Stomach (tissue), 19 donors: ENCODE measurements at regions of chr7 and their contacts with region 1.

Region 1: DNA sequence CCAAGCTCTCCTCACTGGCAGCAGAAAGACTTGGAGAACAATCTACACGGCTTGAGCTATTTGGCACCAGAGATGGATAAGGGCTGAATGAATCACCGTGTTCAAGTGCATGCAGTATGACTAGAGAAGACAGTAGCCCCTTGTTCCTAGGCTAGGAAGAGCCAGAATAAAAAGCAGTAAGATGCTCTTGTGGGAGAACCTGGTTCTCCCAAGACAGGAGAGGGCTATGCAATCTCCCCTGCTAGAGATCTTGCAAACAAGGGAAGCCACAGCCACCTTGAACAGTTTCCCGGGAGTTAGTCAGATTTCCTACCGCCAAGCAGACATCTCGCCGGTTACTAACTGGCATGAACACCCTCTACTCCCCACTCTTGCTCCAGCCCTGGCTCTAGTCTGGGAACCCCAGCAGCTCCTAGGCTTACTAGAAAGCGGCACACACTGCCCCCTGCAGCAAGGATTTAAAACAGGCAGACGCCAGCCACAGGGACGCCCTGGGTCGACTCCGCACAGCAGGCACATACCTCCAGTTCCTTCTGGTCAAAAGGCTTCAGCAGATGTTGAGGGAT is 107.3 kb downstream of the SMURF1 start:
- DNase-seq: peak in 1 of 2 donors; percentile 37
- H3K4me3 ChIP-seq: no peak overlapping the region
- H3K27ac ChIP-seq: peak overlapping the region in 1 of 5 donors; percentile 28
- H3K4me1 ChIP-seq: peaks cover 12 to 16% (median 16%) of the 10 kb centered on the region in 4 donors
- H3K27me3 ChIP-seq: no peaks in the 10 kb centered on the region
- CTCF ChIP-seq: no peak
- EP300 ChIP-seq: no peak
- POLR2A ChIP-seq: no peak

Region 2: GRCh38 chr7:98956937-98957336 is 79.7 kb before region 1 on chr7:
- intact Hi-C with region 1: no loop called
- DNase-seq: no peak
- H3K4me3 ChIP-seq: no peak overlapping the region
- H3K27ac ChIP-seq: no peak overlapping the region
- H3K4me1 ChIP-seq: no peaks in the 10 kb centered on the region
- H3K27me3 ChIP-seq: no peaks in the 10 kb centered on the region
- CTCF ChIP-seq: no peak
- EP300 ChIP-seq: no peak
- POLR2A ChIP-seq: no peak

Region 3: DNA sequence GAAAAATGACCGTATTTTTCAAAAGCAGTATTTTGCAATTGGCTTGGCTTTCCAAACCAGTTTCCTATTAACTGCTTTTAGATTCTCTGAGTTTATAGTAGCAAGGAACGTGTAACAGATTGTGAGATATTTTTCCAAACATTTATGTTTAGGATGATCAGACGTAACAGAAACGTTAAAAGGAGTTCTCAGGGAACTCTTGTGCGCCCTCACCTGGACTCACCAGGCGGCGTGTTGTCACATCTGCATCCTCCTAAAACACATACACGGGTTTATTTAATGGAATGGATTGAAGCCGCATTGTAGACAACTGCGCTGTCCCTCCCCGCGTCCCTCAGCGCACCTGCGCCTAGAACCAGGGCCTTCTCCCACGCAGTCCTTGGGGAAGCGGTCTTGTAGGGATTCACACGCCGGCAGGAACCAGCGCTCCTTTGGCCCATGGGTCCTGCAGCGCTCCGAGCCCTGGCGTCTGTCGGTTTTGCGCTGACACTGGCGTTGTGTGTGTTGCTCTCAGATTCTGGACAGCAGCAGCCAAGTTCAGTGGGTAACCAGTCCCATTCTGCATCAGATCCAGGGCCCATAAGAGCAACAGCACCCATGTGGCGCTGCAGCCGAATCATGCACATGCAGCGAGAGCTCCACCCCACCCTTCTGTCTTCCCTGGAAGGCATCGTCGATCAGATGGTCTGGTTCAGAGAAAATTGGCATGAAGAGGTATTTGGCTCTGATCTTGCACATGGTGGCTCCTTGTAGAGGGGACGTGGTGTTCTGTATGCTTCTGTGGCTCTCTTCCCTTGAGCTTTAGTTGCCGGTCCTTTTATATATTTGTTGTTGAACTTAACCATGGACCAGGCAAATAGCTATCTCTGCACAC is 43.4 kb before region 1 on chr7:
- intact Hi-C with region 1: no loop called
- DNase-seq: no peak
- H3K4me3 ChIP-seq: no peak overlapping the region
- H3K27ac ChIP-seq: no peak overlapping the region
- H3K4me1 ChIP-seq: no peaks in the 10 kb centered on the region
- H3K27me3 ChIP-seq: no peaks in the 10 kb centered on the region
- CTCF ChIP-seq: no peak
- EP300 ChIP-seq: no peak
- POLR2A ChIP-seq: no peak

Region 4: GRCh38 chr7:99143853-99144672 is 107.4 kb after region 1 on chr7 and contains the start of gene SMURF1:
- intact Hi-C with region 1: loop called (anchors 10 kb)
- DNase-seq: peak; percentile 76 to 90
- H3K4me3 ChIP-seq: peak within 1 kb of the TSS; percentile 93 to 100 (median 97)
- H3K27ac ChIP-seq: peak within 1 kb of the TSS; percentile 97 to 100 (median 99)
- H3K4me1 ChIP-seq: peaks cover 20 to 49% (median 43%) of the 10 kb centered on the region in 4 donors
- H3K27me3 ChIP-seq: no peaks in the 10 kb centered on the region
- CTCF ChIP-seq: no peak
- EP300 ChIP-seq: no peak
- POLR2A ChIP-seq: peak in 1 of 4 donors; percentile 11
- total RNA-seq, gene SMURF1: 28.6 to 46.8 (median 36.5) TPM

Region 5: GRCh38 chr7:99200691-99201440 is 164.2 kb after region 1 on chr7:
- intact Hi-C with region 1: no loop called
- DNase-seq: peak in 1 of 2 donors; percentile 23
- H3K4me3 ChIP-seq: no peak overlapping the region
- H3K27ac ChIP-seq: no peak overlapping the region
- H3K4me1 ChIP-seq: no peaks in the 10 kb centered on the region
- H3K27me3 ChIP-seq: no peaks in the 10 kb centered on the region
- CTCF ChIP-seq: no peak
- EP300 ChIP-seq: no peak
- POLR2A ChIP-seq: no peak

Region 6: DNA sequence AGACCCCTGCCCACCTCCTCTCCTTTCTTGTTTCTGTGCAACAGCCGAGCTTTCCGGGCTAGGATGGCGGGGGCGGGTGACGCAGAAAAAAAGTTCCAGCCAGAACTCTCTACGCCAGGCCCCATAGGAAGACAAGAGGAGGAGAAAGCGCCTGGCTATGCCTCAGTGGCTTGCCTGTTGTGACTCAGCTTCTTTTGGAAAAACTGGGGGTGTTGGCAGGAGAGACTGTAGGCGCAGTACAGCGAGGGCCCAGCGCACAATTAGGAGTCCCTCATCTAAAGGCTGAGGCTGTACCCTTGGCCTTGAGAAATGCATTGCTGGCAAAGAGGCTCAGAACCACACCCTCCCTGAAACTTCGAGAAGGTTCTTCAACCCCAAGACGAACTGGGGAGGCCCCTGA is 199.3 kb after region 1 on chr7:
- intact Hi-C with region 1: loop called (anchors 10 kb)
- DNase-seq: no peak
- H3K4me3 ChIP-seq: no peak overlapping the region
- H3K27ac ChIP-seq: no peak overlapping the region
- H3K4me1 ChIP-seq: no peaks in the 10 kb centered on the region
- H3K27me3 ChIP-seq: no peaks in the 10 kb centered on the region
- CTCF ChIP-seq: no peak
- EP300 ChIP-seq: no peak
- POLR2A ChIP-seq: no peak

Region 7: GRCh38 chr7:99312316-99313203 is 275.9 kb after region 1 on chr7:
- intact Hi-C with region 1: loop called (anchors 5 kb)
- DNase-seq: peak; percentile 83 to 87
- H3K4me3 ChIP-seq: peak overlapping the region in 1 of 4 donors; percentile 23
- H3K27ac ChIP-seq: no peak overlapping the region
- H3K4me1 ChIP-seq: peaks cover 0 to 12% (median 8%) of the 10 kb centered on the region in 4 donors
- H3K27me3 ChIP-seq: no peaks in the 10 kb centered on the region
- CTCF ChIP-seq: peak in 6 of 7 experiments; percentile 61 to 95 (median 88)
- EP300 ChIP-seq: no peak
- POLR2A ChIP-seq: no peak